ENCODE measurements at regions of chr15 and their contacts with region 1.

Region 1: GRCh38 chr15:49155110-49155833 is at the start of gene COPS2:
- DNase-seq: peak; percentile 95
- ATAC-seq: peak; percentile 96
- H3K4me3 Mint-ChIP-seq: peak within 1 kb of the TSS; percentile 96
- H3K27ac Mint-ChIP-seq: peak within 1 kb of the TSS; percentile 94
- H3K4me1 Mint-ChIP-seq: peaks cover 37% of the 10 kb centered on the region
- H3K27me3 Mint-ChIP-seq: no peaks in the 10 kb centered on the region
- total RNA-seq, gene COPS2: 82.6 to 95.9 TPM

Region 2: DNA sequence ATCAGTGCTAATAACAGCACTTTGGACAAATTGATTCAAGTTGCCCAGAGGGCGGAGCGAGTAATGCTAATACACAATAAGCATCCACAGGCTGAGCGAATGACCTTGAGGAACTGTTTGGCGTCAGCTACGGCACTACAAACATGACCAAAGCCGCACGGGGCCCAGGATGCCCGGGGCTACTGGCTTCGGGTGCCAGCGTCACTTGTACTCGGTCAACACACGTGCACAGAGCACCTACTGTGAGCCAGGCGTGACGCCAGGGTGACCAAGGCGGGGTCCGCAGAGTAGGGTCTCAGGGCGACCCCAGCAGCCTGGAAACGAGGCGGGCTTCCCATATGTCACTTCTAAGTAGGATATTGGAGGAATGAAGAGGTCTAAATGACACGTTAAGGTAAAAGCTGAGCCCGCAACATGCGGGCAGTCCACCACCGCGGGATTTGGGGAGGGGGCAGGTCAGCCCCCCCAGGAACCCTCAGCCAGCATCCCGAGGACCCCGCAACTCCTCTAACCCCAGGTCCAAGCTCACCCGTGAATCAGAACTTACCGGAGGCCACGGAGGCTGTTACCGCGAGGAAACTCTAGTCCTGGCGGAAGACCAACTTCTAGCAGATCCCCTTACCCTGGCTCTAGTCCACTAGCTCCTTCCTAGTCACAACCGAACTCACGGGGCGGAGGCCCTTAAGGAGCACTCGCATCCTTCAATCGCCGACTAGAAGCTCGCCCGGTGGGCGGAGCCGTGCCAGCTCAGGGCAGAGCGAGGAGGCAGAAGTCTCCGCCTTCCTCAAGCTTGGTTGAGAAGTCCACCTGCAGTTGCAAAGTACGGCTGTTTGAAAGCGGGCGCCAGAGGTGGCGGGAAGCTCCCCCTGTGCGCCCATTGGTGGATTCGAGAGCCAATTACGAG is 344.6 kb before region 1 on chr15 and contains the start of gene CEP152:
- CTCF ChIA-PET with region 1: no interaction called
- POLR2A ChIA-PET with region 1: interaction called, 3 read pairs
- intact Hi-C with region 1: loop called (anchors 1 to 2 kb)
- DNase-seq: peak; percentile 98
- ATAC-seq: peak; percentile 97
- H3K4me3 Mint-ChIP-seq: peak within 1 kb of the TSS; percentile 79
- H3K27ac Mint-ChIP-seq: peak within 1 kb of the TSS; percentile 95
- H3K4me1 Mint-ChIP-seq: peaks cover 24% of the 10 kb centered on the region
- H3K27me3 Mint-ChIP-seq: no peaks in the 10 kb centered on the region
- total RNA-seq, gene CEP152: 34.4 to 42.2 TPM

Region 3: DNA sequence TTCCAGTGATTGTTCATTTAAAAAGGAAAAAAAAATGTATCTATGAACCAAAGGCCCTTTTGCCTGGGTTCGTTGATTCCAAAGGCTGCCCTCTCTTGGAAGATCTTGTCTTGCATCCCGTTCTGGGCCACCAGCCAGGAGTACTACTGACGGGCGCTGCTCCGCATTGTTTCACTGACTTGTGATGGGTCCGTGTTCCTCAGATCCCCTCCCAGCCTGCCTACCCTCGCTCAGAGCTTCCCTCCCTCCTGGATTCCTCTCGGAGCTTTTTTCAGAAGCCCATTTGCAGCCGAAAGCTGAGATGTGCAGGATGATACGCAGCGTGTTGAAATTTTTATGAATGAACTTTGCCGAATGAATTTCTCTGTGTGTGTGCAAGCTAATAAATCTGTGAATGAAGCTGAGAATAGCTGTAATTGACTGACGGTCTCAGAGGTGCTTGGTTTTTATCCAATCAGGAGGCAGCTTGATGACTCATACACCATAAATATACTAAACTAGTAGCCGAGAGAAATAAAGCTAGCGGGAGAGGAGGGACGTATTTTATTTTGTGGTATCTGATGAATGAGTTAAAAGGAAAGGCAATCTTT is 191.7 kb before region 1 on chr15 and contains the start of gene SHC4:
- CTCF ChIA-PET with region 1: no interaction called
- POLR2A ChIA-PET with region 1: no interaction called
- intact Hi-C with region 1: loop called in 1 of 2 experiments (anchors 2 kb)
- DNase-seq: peak; percentile 29
- ATAC-seq: peak; percentile 45
- H3K4me3 Mint-ChIP-seq: peak within 1 kb of the TSS; percentile 69
- H3K27ac Mint-ChIP-seq: peak within 1 kb of the TSS; percentile 84
- H3K4me1 Mint-ChIP-seq: peaks cover 34% of the 10 kb centered on the region
- H3K27me3 Mint-ChIP-seq: peaks cover 38% of the 10 kb centered on the region
- total RNA-seq, gene SHC4: 1.4 TPM

Region 4: GRCh38 chr15:49052662-49053061 is 102.6 kb before region 1 on chr15:
- CTCF ChIA-PET with region 1: no interaction called
- POLR2A ChIA-PET with region 1: no interaction called
- intact Hi-C with region 1: no loop called
- DNase-seq: no peak
- ATAC-seq: no peak
- H3K4me3 Mint-ChIP-seq: no peak overlapping the region
- H3K27ac Mint-ChIP-seq: no peak overlapping the region
- H3K4me1 Mint-ChIP-seq: no peaks in the 10 kb centered on the region
- H3K27me3 Mint-ChIP-seq: no peaks in the 10 kb centered on the region

Region 5: DNA sequence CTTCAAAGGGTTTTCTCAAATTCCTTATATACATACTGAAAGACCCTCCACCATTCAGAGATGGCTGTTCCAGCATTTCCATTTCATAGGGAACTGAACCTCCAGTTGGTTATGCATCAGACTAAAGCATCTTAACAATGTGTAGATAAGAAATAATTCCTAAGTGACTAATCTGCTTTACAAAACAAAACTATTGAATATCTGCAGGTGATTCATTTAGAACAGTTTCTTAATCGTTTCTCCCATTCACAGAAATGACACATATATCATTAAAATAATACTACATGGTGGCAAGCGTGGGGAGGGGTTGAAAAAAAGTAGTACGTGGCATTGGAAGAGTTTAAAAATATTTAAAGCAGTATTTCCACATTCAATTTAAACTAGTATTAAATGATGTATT is 19.4 kb before region 1 on chr15:
- CTCF ChIA-PET with region 1: no interaction called
- POLR2A ChIA-PET with region 1: interaction called, 6 read pairs
- intact Hi-C with region 1: loop called in 1 of 2 experiments (anchors 2 kb)
- DNase-seq: no peak
- ATAC-seq: peak; percentile 47
- H3K4me3 Mint-ChIP-seq: no peak overlapping the region
- H3K27ac Mint-ChIP-seq: no peak overlapping the region
- H3K4me1 Mint-ChIP-seq: peaks cover 13% of the 10 kb centered on the region
- H3K27me3 Mint-ChIP-seq: no peaks in the 10 kb centered on the region

Region 6: DNA sequence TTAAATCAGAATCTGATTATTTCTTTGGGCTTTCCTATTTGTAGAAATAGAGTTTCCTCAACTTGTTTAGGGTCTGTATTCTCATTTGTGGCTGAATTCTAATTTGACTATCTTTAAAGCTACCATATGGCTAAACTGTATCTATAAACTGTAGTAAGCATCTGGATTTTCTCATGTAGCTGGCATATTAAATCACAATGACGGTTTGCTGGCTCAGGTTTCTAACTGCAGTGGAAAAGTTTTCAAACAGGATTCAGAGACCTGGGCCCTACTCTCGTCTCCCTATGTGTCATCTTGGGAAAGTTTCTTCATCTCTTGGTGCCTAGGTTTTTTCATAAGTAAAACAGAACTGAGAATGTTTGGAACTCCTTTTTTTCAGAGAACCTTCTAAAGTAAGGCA is 83.1 kb after region 1 on chr15:
- CTCF ChIA-PET with region 1: no interaction called
- POLR2A ChIA-PET with region 1: no interaction called
- intact Hi-C with region 1: no loop called
- DNase-seq: no peak
- ATAC-seq: no peak
- H3K4me3 Mint-ChIP-seq: no peak overlapping the region
- H3K27ac Mint-ChIP-seq: no peak overlapping the region
- H3K4me1 Mint-ChIP-seq: peaks cover 4% of the 10 kb centered on the region
- H3K27me3 Mint-ChIP-seq: no peaks in the 10 kb centered on the region

Region 7: GRCh38 chr15:49421991-49422390 is 266.7 kb after region 1 on chr15:
- CTCF ChIA-PET with region 1: no interaction called
- POLR2A ChIA-PET with region 1: no interaction called
- intact Hi-C with region 1: loop called in 1 of 2 experiments (anchors 5 kb)
- DNase-seq: peak; percentile 51
- ATAC-seq: peak; percentile 26
- H3K4me3 Mint-ChIP-seq: no peak overlapping the region
- H3K27ac Mint-ChIP-seq: no peak overlapping the region
- H3K4me1 Mint-ChIP-seq: peaks cover 4% of the 10 kb centered on the region
- H3K27me3 Mint-ChIP-seq: no peaks in the 10 kb centered on the region

Region 8: DNA sequence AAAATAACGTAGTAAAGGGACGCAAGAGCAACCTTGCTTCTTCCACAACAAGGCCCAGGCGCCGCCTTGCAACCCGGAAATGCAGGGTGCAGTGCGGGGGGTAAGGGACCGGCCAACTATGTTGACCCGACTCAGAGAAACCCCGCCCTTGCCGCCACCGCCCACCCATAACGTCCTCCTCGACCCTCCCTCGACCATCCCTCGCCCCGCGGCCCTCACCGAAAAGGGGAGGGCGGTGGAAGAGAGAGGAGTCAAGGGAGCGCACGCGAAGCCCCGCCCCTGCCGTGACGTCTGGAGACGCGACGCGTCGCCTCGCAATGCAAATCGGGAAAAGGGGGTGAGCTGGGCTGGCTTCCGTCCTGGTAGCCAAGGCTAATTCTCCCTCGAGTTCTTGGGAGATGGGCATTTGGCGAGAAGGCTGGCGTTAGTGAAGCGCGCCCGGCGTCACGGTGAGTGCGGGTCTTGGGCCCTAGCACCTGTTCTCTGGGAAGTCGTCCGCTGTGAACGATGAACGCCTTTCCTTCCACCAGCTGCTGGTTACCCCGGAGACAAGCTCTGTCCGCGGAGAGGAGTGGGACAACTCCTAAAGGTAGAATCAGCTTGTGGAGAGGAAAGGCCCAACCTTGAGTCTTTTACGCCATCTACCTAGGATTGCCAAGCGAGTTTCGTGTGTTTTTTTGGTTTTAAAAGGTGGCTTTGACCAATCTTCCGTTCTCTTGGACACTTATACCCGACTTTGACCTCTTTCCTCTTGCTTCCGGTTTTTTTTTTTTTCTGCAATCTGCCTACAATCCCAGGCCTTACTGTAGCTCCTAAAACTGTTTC is 1269.0 kb after region 1 on chr15 and contains the start of gene USP8:
- CTCF ChIA-PET with region 1: no interaction called
- POLR2A ChIA-PET with region 1: no interaction called
- intact Hi-C with region 1: loop called in 1 of 2 experiments (anchors 10 kb)
- DNase-seq: peak; percentile 97
- ATAC-seq: peak; percentile 98
- H3K4me3 Mint-ChIP-seq: peak within 1 kb of the TSS; percentile 88
- H3K27ac Mint-ChIP-seq: peak within 1 kb of the TSS; percentile 92
- H3K4me1 Mint-ChIP-seq: peaks cover 32% of the 10 kb centered on the region
- H3K27me3 Mint-ChIP-seq: no peaks in the 10 kb centered on the region
- total RNA-seq, gene USP8: 39.8 to 45.3 TPM